Activated CD4-positive, alpha-beta memory T cell treated with anti-CD3 and anti-CD28 coated beads for 36 hours (primary cell): ENCODE measurements at regions of chr17 and their contacts with region 1.

Region 1: GRCh38 chr17:74742153-74742515 is 5.1 kb downstream of the RAB37 start:
- DNase-seq: peak; percentile 79
- H3K4me3 Mint-ChIP-seq: peak overlapping the region; percentile 38
- H3K27ac Mint-ChIP-seq: peak overlapping the region; percentile 88
- H3K4me1 Mint-ChIP-seq: peaks cover 79% of the 10 kb centered on the region
- H3K27me3 Mint-ChIP-seq: no peaks in the 10 kb centered on the region

Region 2: DNA sequence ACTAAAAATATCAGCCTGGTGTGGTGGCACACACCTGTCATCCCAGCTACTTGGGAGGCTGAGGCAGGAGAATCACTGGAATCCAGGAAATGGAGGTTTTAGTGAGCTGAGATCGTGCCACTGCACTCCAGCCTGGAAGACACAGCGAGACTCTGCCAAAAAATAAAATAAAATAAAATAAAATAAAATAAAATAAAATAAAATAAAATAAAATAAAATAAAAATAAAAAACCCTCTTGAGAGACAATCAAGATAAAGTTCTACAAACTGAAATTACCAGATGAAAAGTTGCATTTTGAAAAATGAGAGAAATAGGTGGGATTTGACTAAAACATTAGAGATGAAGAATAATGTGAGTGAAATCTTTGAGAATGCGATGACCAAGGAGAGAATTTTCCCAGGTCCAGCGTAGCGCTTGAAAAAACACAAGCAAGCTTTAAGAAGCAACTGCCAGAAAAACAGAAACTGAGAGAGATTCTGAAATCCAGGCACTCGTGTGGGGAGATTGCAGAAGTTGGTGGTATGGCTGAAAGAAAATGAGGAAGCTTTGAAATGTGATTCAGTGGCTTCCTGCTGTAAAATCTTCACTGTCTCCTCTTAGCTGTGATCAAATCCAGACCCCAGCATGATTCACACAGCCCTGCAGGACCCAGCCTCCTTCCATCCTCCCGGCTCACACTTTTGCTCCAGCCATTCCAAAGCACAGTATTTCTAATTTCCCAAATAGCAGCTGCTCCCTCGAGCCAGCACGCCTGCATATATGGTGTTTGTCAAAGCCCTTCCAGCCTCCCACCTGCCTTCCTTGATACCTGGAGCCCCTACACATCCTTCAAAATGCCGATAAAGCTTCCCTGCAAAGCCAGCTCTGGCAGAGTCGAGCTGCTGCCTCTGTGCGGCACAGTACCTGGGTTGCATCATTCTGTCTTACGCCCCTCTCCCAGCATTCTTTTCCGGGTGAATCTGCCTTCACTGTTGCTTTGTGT is 110.4 kb before region 1 on chr17:
- CTCF ChIA-PET with region 1: no interaction called
- POLR2A ChIA-PET with region 1: no interaction called
- intact Hi-C with region 1: no loop called
- DNase-seq: no peak
- H3K4me3 Mint-ChIP-seq: no peak overlapping the region
- H3K27ac Mint-ChIP-seq: no peak overlapping the region
- H3K4me1 Mint-ChIP-seq: no peaks in the 10 kb centered on the region
- H3K27me3 Mint-ChIP-seq: peaks cover 22% of the 10 kb centered on the region

Region 3: GRCh38 chr17:74759243-74759801 is 17.2 kb after region 1 on chr17:
- CTCF ChIA-PET with region 1: interaction called, 75 read pairs
- POLR2A ChIA-PET with region 1: no interaction called
- intact Hi-C with region 1: loop called (anchors 2 kb)
- DNase-seq: peak; percentile 73
- H3K4me3 Mint-ChIP-seq: peak overlapping the region; percentile 23
- H3K27ac Mint-ChIP-seq: peak overlapping the region; percentile 85
- H3K4me1 Mint-ChIP-seq: peaks cover 69% of the 10 kb centered on the region
- H3K27me3 Mint-ChIP-seq: no peaks in the 10 kb centered on the region

Region 4: GRCh38 chr17:74770498-74771318 is 28.6 kb after region 1 on chr17:
- CTCF ChIA-PET with region 1: interaction called, 92 read pairs
- POLR2A ChIA-PET with region 1: interaction called, 7 read pairs
- intact Hi-C with region 1: loop called (anchors 1 kb)
- DNase-seq: peak; percentile 83
- H3K4me3 Mint-ChIP-seq: no peak overlapping the region
- H3K27ac Mint-ChIP-seq: peak overlapping the region; percentile 71
- H3K4me1 Mint-ChIP-seq: peaks cover 40% of the 10 kb centered on the region
- H3K27me3 Mint-ChIP-seq: no peaks in the 10 kb centered on the region

Region 5: DNA sequence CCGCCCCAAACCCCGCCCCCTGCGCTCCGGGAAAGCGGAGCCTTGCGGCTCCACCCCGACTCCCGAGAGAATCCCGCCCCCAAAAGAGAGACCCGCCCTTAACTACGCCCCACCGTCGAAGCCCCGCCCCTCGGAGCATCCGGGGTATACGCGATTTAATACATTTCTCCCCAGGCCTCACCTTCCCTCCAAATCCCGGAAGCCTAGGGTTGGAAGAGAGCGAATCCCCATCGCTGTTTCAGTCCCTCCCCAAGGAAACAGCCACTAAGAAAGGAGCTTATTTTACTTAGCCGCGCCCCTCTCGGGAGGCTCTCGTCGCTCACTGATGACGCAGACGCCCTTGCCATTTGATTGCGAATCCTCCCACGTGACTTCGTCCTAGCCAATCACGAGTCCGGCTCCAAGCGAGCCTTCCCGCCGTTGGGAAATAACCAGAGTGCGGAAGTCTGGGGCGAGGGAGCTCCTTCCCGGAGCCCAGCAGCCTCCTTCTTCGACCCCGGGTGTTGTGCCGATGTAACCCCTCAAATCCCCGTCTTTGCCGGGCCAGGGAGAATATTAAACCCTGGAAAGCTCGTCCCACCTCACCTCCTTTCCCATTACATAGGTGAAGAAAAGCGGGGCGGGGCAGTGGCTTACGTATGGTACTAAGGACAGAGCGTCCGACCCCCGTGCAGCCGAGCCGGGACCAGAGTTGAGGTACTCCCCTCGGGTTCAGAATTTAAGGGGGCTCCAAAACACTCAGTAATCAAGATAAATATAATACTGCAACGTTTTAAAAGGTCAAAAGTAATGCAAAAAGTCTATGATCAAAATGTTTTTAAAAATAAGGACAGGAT is 131.1 kb after region 1 on chr17:
- CTCF ChIA-PET with region 1: interaction called, 12 read pairs
- POLR2A ChIA-PET with region 1: interaction called, 9 read pairs
- intact Hi-C with region 1: loop called (anchors 1 kb)
- DNase-seq: peak; percentile 100
- H3K4me3 Mint-ChIP-seq: peak overlapping the region; percentile 80
- H3K27ac Mint-ChIP-seq: peak overlapping the region; percentile 93
- H3K4me1 Mint-ChIP-seq: peaks cover 25% of the 10 kb centered on the region
- H3K27me3 Mint-ChIP-seq: no peaks in the 10 kb centered on the region

Region 6: DNA sequence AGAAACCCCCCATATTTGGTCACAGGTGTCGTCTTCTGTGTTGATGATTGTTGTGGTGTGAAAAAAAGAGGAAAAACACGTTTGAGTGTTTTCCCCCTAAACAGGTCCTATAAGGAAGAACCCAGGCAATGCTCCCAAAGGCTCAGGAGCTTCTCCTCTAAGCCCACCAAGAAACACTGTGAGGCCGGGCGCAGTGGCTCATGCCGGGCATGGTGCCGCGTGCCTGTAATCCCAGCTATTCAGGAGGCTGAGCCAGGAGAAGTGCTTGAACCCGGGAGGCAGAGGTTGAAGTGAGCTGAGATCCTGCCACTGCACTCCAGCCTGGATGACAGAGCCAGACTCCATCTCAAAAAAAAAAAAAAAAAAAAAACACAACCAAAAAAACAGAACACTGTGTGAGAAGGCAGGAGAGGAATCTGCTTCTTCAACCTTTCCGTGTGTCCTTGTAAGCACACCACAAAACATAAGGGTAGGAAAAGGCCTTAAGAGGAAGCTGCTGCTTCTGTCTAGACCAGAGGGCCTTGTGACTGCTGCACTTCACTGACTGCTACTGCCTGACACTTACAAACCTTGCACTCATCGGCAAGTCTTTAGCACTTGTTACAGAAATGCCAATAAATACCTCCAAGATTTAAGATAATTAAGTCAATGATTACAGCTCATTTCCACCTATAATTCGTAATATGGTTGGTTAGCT is 402.8 kb after region 1 on chr17:
- CTCF ChIA-PET with region 1: no interaction called
- POLR2A ChIA-PET with region 1: no interaction called
- intact Hi-C with region 1: no loop called
- DNase-seq: no peak
- H3K4me3 Mint-ChIP-seq: no peak overlapping the region
- H3K27ac Mint-ChIP-seq: no peak overlapping the region
- H3K4me1 Mint-ChIP-seq: peaks cover 10% of the 10 kb centered on the region
- H3K27me3 Mint-ChIP-seq: no peaks in the 10 kb centered on the region